Mammary epithelial cell (primary cell): ENCODE measurements at regions of chr6 and their contacts with region 1.

Region 1: GRCh38 chr6:158143700-158144099 is 24.4 kb downstream of the SERAC1 start:
- DNase-seq: peak; percentile 19
- H3K4me3 ChIP-seq: no peak overlapping the region
- H3K27ac ChIP-seq: no peak overlapping the region
- H3K4me1 ChIP-seq: no peaks in the 10 kb centered on the region
- H3K27me3 ChIP-seq: no peaks in the 10 kb centered on the region
- CTCF ChIP-seq: peak; percentile 30 to 48

Region 2: GRCh38 chr6:158165919-158166416 is 22.3 kb after region 1 on chr6:
- CTCF ChIA-PET with region 1: no interaction called
- dilution Hi-C with region 1: no loop called
- in situ Hi-C with region 1: no loop called
- intact Hi-C with region 1: loop called (anchors 2 kb)
- DNase-seq: no peak
- H3K4me3 ChIP-seq: no peak overlapping the region
- H3K27ac ChIP-seq: no peak overlapping the region
- H3K4me1 ChIP-seq: peaks cover 20% of the 10 kb centered on the region
- H3K27me3 ChIP-seq: no peaks in the 10 kb centered on the region
- CTCF ChIP-seq: no peak